ENCODE measurements at regions of chr7 and their contacts with region 1.

Region 1: GRCh38 chr7:17940302-17940883 is at the start of gene SNX13:
- DNase-seq: peak; percentile 87
- ATAC-seq: peak; percentile 97
- H3K4me3 ChIP-seq: peak within 1 kb of the TSS; percentile 64 to 97 (median 86)
- H3K27ac ChIP-seq: peak within 1 kb of the TSS; percentile 92
- H3K4me1 ChIP-seq: peaks cover 38% of the 10 kb centered on the region
- H3K27me3 ChIP-seq: no peaks in the 10 kb centered on the region; a peak in 1 of 5 replicates
- CTCF ChIP-seq: peak; percentile 81
- EP300 ChIP-seq: peak in 1 of 2 experiments; percentile 16; a peak in 1 of 4 replicates
- POLR2A ChIP-seq: peak; percentile 70 to 81
- RAD21 ChIP-seq: peak; percentile 68
- total RNA-seq, gene SNX13: 32.3 and 35.7 TPM in 2 replicates

Region 2: GRCh38 chr7:17802056-17802455 is 138.3 kb before region 1 on chr7:
- CTCF ChIA-PET with region 1: no interaction called
- POLR2A ChIA-PET with region 1: no interaction called
- in situ Hi-C with region 1: no loop called
- intact Hi-C with region 1: loop called (anchors 10 kb)
- DNase-seq: no peak
- ATAC-seq: no peak
- H3K4me3 ChIP-seq: no peak overlapping the region
- H3K27ac ChIP-seq: no peak overlapping the region
- H3K4me1 ChIP-seq: peaks cover 5% of the 10 kb centered on the region
- H3K27me3 ChIP-seq: no peaks in the 10 kb centered on the region
- CTCF ChIP-seq: no peak
- EP300 ChIP-seq: no peak
- POLR2A ChIP-seq: no peak
- RAD21 ChIP-seq: no peak

Region 3: DNA sequence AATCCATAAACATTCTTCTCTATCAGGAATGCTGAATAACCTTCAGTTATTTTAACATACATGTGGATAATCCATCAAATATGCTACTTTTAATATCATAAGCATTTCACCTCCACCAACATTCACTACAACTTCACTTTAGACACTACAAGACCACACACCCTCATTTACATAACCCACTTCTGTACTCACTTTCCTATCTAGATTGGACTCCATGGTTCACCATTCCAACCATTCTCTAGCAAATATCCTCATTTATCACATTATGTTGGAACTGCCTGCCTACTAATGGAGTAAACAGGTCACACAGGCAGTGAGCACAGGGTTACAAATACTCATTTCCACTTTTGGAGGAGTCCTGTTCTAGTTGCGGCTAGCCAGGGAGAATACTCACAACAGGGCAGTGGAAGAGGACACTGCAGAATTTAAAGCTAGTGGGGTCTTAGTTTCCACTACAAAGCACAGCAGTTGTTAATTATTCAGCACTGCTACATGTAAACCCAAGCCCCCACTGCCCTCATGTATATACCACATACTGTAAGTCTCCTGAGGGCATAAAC is 18.5 kb before region 1 on chr7:
- CTCF ChIA-PET with region 1: no interaction called
- POLR2A ChIA-PET with region 1: no interaction called
- in situ Hi-C with region 1: no loop called
- intact Hi-C with region 1: loop called (anchors 2 kb)
- DNase-seq: no peak
- ATAC-seq: no peak
- H3K4me3 ChIP-seq: no peak overlapping the region
- H3K27ac ChIP-seq: no peak overlapping the region
- H3K4me1 ChIP-seq: peaks cover 31% of the 10 kb centered on the region
- H3K27me3 ChIP-seq: no peaks in the 10 kb centered on the region
- CTCF ChIP-seq: no peak
- EP300 ChIP-seq: no peak
- POLR2A ChIP-seq: no peak
- RAD21 ChIP-seq: no peak

Measured in HepG2 (cell line).